ENCODE measurements at regions of chr12 and their contacts with region 1.

Region 1: GRCh38 chr12:93397412-93397811 is 19.7 kb downstream of the NUDT4 start:
- DNase-seq: no peak
- ATAC-seq: no peak
- H3K4me3 ChIP-seq: no peak overlapping the region
- H3K27ac ChIP-seq: no peak overlapping the region
- H3K4me1 ChIP-seq: no peaks in the 10 kb centered on the region
- H3K27me3 ChIP-seq: no peaks in the 10 kb centered on the region
- CTCF ChIP-seq: no peak
- POLR2A ChIP-seq: no peak
- RAD21 ChIP-seq: no peak

Region 2: GRCh38 chr12:92784795-92785562 is 612.4 kb before region 1 on chr12:
- CTCF ChIA-PET with region 1: no interaction called
- POLR2A ChIA-PET with region 1: no interaction called
- dilution Hi-C with region 1: no loop called
- in situ Hi-C with region 1: loop called (anchors 25 kb)
- intact Hi-C with region 1: loop called (anchors 5 kb)
- DNase-seq: peak; percentile 79
- ATAC-seq: peak; percentile 74
- H3K4me3 ChIP-seq: no peak overlapping the region
- H3K27ac ChIP-seq: peak overlapping the region; percentile 74; the same call in 1 of the 2 replicates
- H3K4me1 ChIP-seq: peaks cover 8% of the 10 kb centered on the region
- H3K27me3 ChIP-seq: no peaks in the 10 kb centered on the region
- CTCF ChIP-seq: peak; percentile 61
- POLR2A ChIP-seq: no peak
- RAD21 ChIP-seq: peak; percentile 74

Region 3: GRCh38 chr12:94012590-94012989 is 615.2 kb after region 1 on chr12:
- CTCF ChIA-PET with region 1: no interaction called
- POLR2A ChIA-PET with region 1: no interaction called
- dilution Hi-C with region 1: no loop called
- in situ Hi-C with region 1: no loop called
- intact Hi-C with region 1: no loop called
- DNase-seq: no peak
- ATAC-seq: no peak
- H3K4me3 ChIP-seq: no peak overlapping the region
- H3K27ac ChIP-seq: no peak overlapping the region
- H3K4me1 ChIP-seq: no peaks in the 10 kb centered on the region
- H3K27me3 ChIP-seq: no peaks in the 10 kb centered on the region
- CTCF ChIP-seq: no peak
- POLR2A ChIP-seq: no peak
- RAD21 ChIP-seq: no peak

Measured in IMR-90 (cell line).